ENCODE measurements at regions of chr1 and their contacts with region 1.

Region 1: GRCh38 chr1:178189814-178190213 is 95.9 kb downstream of the RASAL2 start:
- DNase-seq: peak in 1 of 2 donors; percentile 46
- ATAC-seq: peak in 6 of 8 donors; percentile 71 to 81 (median 78)
- H3K4me3 ChIP-seq: no peak overlapping the region
- H3K27ac ChIP-seq: no peak overlapping the region
- H3K4me1 ChIP-seq: peaks cover 0 to 71% (median 20%) of the 10 kb centered on the region in 9 donors
- H3K27me3 ChIP-seq: no peaks in the 10 kb centered on the region
- CTCF ChIP-seq: peak; percentile 27 to 74 (median 63)

Region 2: GRCh38 chr1:177650947-177651346 is 538.9 kb before region 1 on chr1:
- intact Hi-C with region 1: no loop called
- DNase-seq: no peak
- ATAC-seq: peak in 6 of 8 donors; percentile 31 to 99 (median 73)
- H3K4me3 ChIP-seq: no peak overlapping the region
- H3K27ac ChIP-seq: peak overlapping the region in 1 of 10 donors; percentile 52
- H3K4me1 ChIP-seq: peaks cover 0 to 4% (median 0%) of the 10 kb centered on the region in 9 donors
- H3K27me3 ChIP-seq: peaks cover 0 to 13% (median 3%) of the 10 kb centered on the region in 7 donors
- CTCF ChIP-seq: no peak

Region 3: DNA sequence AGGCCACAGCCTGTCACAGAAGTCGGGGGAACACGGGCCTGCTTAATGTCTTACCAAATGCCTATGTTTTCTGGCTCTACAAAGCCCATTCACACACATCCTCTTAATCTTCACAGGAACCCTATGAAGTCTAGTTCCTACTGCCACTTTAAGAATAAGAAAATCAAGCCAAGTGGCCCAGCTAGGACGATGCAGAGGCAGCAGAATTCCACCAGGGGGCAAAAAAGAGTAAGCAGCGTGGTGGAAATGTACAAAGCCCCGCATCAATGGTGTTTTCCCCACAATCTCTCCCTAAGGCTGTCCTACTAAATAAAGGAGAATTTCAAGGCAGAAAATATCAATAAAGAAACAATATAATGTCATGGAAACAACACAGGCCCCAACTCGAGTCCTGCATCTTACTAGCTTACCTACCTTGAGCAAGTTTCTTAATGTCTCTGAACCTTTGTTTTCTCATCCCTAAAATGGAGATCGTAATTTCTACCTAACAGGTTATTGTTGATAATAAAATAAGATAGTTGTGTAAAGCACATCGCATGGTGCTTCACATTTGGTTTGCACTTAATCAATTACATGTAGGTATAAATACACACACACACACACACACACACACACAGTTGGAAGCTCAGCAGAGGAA is 241.4 kb before region 1 on chr1:
- intact Hi-C with region 1: loop called in 3 of 10 experiments (anchors 10 kb)
- DNase-seq: peak in 1 of 2 donors; percentile 46
- ATAC-seq: peak in 7 of 8 donors; percentile 45 to 77 (median 56)
- H3K4me3 ChIP-seq: no peak overlapping the region
- H3K27ac ChIP-seq: no peak overlapping the region
- H3K4me1 ChIP-seq: peaks cover 0 to 10% (median 0%) of the 10 kb centered on the region in 9 donors
- H3K27me3 ChIP-seq: no peaks in the 10 kb centered on the region
- CTCF ChIP-seq: peak; percentile 77 to 91 (median 89)

Region 4: GRCh38 chr1:177959811-177960515 is 229.9 kb before region 1 on chr1:
- intact Hi-C with region 1: loop called in 3 of 10 experiments (anchors 10 kb)
- DNase-seq: no peak
- ATAC-seq: peak in 4 of 8 donors; percentile 37 to 77 (median 54)
- H3K4me3 ChIP-seq: no peak overlapping the region
- H3K27ac ChIP-seq: no peak overlapping the region
- H3K4me1 ChIP-seq: no peaks in the 10 kb centered on the region
- H3K27me3 ChIP-seq: no peaks in the 10 kb centered on the region
- CTCF ChIP-seq: peak in 8 of 9 donors; percentile 29 to 54 (median 36)

Region 5: GRCh38 chr1:178037503-178038253 is 152.1 kb before region 1 on chr1:
- intact Hi-C with region 1: loop called in 4 of 10 experiments (anchors 5 kb)
- DNase-seq: peak; percentile 89 to 95
- ATAC-seq: peak; percentile 96 to 100 (median 98)
- H3K4me3 ChIP-seq: peak overlapping the region; percentile 19 to 93 (median 77)
- H3K27ac ChIP-seq: peak overlapping the region; percentile 35 to 93 (median 88)
- H3K4me1 ChIP-seq: peaks cover 0 to 43% (median 19%) of the 10 kb centered on the region in 9 donors
- H3K27me3 ChIP-seq: no peaks in the 10 kb centered on the region
- CTCF ChIP-seq: peak; percentile 27 to 73 (median 54)

Region 6: DNA sequence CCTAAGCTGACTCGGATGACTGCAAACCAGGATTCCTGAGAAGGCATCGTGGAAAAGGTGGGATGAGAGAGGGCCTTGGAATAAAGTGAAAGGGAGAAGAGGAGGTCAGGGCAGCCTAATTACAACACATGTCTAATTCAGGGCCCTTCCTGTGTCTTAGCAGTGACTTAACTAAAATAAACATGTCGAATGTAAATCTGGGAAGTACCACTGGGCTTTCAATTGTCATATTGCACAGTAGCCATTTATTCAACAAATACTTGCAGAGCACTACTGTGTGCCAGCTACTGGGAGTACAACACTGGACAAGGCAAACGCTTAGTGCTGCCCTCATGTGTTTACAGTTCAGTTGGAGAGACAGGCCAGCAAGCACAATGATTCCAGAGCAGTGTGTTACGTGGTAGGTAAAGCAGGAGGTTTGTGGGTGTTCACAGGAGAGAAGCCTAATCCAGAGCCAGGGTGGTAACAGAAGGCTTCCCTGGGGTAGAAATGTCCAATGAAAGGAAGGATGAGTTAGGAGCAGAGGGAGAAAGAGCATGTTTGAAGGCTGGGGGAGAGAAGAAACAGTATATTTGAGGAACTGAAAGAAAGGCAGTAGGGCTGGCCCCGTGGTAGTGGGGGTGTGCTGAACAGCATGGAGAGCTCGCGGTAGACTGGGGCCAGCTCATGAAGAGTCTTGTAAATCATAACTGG is 133.9 kb before region 1 on chr1:
- intact Hi-C with region 1: loop called in 5 of 10 experiments (anchors 5 to 10 kb)
- DNase-seq: peak in 1 of 2 donors; percentile 38
- ATAC-seq: peak in 6 of 8 donors; percentile 43 to 64 (median 48)
- H3K4me3 ChIP-seq: no peak overlapping the region
- H3K27ac ChIP-seq: peak overlapping the region; percentile 72 to 95 (median 82)
- H3K4me1 ChIP-seq: peaks cover 31 to 97% (median 90%) of the 10 kb centered on the region in 9 donors
- H3K27me3 ChIP-seq: no peaks in the 10 kb centered on the region
- CTCF ChIP-seq: peak in 7 of 9 donors; percentile 4 to 53 (median 26)

Region 7: GRCh38 chr1:178093205-178093957 is 96.4 kb before region 1 on chr1:
- intact Hi-C with region 1: loop called in 4 of 10 experiments (anchors 5 to 10 kb)
- DNase-seq: peak; percentile 91 to 95
- ATAC-seq: peak; percentile 83 to 94 (median 90)
- H3K4me3 ChIP-seq: peak overlapping the region; percentile 45 to 100 (median 96)
- H3K27ac ChIP-seq: peak overlapping the region; percentile 75 to 97 (median 94)
- H3K4me1 ChIP-seq: peaks cover 0 to 53% (median 45%) of the 10 kb centered on the region in 9 donors
- H3K27me3 ChIP-seq: peaks cover 0 to 14% (median 0%) of the 10 kb centered on the region in 7 donors
- CTCF ChIP-seq: peak in 1 of 9 donors; percentile 14